Heart left ventricle (tissue), 16 donors: ENCODE measurements at regions of chr7 and their contacts with region 1.

Region 1: DNA sequence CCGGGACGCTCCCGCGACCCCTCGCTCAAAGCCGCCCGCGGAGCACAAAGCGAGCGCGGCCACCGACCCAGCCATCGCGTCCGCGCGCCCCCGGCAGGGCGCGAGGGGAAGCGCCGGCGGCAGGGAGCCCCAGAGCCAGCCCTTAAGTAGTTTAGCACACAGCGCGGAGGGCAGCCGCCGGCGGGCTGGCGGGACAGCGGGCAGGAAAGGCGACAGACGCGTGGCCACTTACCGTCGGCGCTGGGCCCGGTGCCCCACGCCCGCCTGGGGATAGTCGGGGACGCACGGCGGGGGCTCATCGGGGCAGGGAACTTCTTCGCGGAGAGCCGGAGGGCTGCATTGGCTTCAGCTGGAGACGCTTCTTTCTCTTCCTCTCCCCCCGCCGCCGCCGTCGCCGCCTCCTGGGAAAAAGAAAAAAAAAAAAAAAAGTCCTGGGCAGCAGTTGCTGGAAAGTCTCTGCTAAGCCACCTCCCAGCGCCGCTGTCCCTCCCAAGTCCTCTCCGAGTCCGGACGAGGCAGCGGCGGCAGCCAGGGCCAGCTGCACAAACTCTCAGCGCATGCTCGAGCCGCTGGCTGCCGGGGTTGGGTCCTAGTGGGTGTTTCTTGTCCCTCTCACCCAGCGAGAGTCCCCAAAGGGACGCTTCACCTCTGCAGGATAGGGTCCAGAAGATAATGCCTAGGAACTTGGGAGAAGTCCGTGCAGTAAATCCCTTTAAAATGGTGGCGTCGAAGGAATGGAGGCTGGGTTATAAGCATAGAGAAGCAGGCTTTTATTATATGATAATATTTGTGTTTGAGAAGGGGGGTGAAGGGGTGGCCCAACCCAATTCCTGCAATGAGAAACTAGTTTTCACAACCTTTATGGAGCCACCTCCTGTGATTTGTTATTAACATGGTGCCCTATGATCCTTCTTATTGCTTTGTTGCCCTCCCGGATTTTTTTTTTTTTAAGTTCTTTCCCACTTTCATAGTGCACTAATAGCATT is at the start of gene TSPAN12:
- DNase-seq: peak; percentile 86 to 94 (median 93)
- ATAC-seq: peak; percentile 88 to 96 (median 94)
- H3K4me3 ChIP-seq: peak within 1 kb of the TSS; percentile 68 to 90 (median 76)
- H3K27ac ChIP-seq: peak within 1 kb of the TSS; percentile 81 to 98 (median 94)
- H3K4me1 ChIP-seq: peaks cover 0 to 18% (median 7%) of the 10 kb centered on the region in 12 donors
- H3K27me3 ChIP-seq: peaks cover 0 to 20% (median 0%) of the 10 kb centered on the region in 9 donors
- CTCF ChIP-seq: peak; percentile 50 to 90 (median 75)
- POLR2A ChIP-seq: no peak
- total RNA-seq, gene TSPAN12: 24.2 to 85.0 (median 59.7) TPM

Region 2: DNA sequence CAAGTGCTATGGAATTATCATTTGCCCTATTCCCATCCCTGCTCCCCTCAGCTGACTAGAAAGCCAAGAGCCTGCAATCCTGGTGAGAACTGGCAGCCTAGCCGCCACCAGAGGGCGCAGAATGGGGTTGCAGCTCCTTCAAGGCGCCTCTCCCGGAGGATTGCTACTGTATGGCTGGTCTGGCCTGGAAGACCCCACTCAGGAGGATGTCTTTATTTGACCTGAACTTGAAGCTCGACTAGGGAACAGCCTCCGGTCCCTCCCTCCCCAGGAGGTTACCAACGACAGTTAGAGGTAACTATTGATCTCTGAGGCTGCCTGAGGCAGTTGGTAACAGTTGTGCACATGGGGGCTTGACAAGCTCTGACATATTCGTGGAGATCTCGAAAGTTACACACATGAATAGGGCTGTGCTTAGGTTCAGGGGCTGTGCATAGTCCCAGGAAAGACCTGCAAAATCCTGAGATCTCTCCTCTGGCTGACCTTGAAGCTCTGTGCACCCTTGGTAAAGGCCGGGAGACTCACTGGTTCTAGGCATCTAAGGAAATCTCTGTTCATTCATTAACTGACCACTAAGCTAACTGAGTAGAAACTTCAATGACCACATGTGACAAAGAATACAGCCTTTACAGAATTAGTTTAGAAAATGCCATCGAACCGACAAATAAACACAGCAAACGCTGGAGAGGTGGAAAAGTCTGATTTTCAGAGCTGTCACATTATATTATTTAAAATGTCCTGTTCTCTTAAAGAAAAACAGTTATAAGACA is 65.6 kb before region 1 on chr7:
- intact Hi-C with region 1: loop called in 2 of 10 experiments (anchors 5 kb)
- DNase-seq: peak; percentile 65 to 83 (median 78)
- ATAC-seq: peak in 3 of 4 donors; percentile 75 to 92 (median 89)
- H3K4me3 ChIP-seq: no peak overlapping the region
- H3K27ac ChIP-seq: no peak overlapping the region
- H3K4me1 ChIP-seq: peaks cover 0 to 27% (median 5%) of the 10 kb centered on the region in 12 donors
- H3K27me3 ChIP-seq: no peaks in the 10 kb centered on the region
- CTCF ChIP-seq: peak; percentile 65 to 90 (median 80)
- POLR2A ChIP-seq: no peak

Region 3: GRCh38 chr7:120805636-120806388 is 52.1 kb before region 1 on chr7:
- intact Hi-C with region 1: loop called (anchors 2 to 5 kb)
- DNase-seq: peak in 4 of 5 donors; percentile 30 to 56 (median 48)
- ATAC-seq: peak in 1 of 4 donors; percentile 75
- H3K4me3 ChIP-seq: no peak overlapping the region
- H3K27ac ChIP-seq: no peak overlapping the region
- H3K4me1 ChIP-seq: peaks cover 0 to 26% (median 1%) of the 10 kb centered on the region in 12 donors
- H3K27me3 ChIP-seq: no peaks in the 10 kb centered on the region
- CTCF ChIP-seq: peak; percentile 82 to 93 (median 89)
- POLR2A ChIP-seq: no peak

Region 4: GRCh38 chr7:120941064-120941463 is 83.2 kb after region 1 on chr7:
- intact Hi-C with region 1: loop called in 4 of 10 experiments (anchors 5 to 10 kb)
- DNase-seq: no peak
- ATAC-seq: peak in 1 of 4 donors; percentile 50
- H3K4me3 ChIP-seq: no peak overlapping the region
- H3K27ac ChIP-seq: no peak overlapping the region
- H3K4me1 ChIP-seq: peaks cover 0 to 8% (median 0%) of the 10 kb centered on the region in 12 donors
- H3K27me3 ChIP-seq: no peaks in the 10 kb centered on the region
- CTCF ChIP-seq: peak in 9 of 12 donors; percentile 15 to 59 (median 53)
- POLR2A ChIP-seq: no peak

Region 5: GRCh38 chr7:120950539-120951308 is 92.8 kb after region 1 on chr7 and contains the start of gene ING3:
- intact Hi-C with region 1: loop called in 7 of 10 experiments (anchors 1 to 10 kb)
- DNase-seq: peak; percentile 97 to 98 (median 98)
- ATAC-seq: peak; percentile 98 to 99 (median 99)
- H3K4me3 ChIP-seq: peak within 1 kb of the TSS; percentile 53 to 79 (median 72)
- H3K27ac ChIP-seq: peak within 1 kb of the TSS; percentile 65 to 98 (median 96)
- H3K4me1 ChIP-seq: peaks cover 6 to 27% (median 20%) of the 10 kb centered on the region in 12 donors
- H3K27me3 ChIP-seq: no peaks in the 10 kb centered on the region
- CTCF ChIP-seq: no peak
- POLR2A ChIP-seq: peak in 1 of 2 donors; percentile 45
- total RNA-seq, gene ING3: 9.3 to 16.0 (median 13.3) TPM

Region 6: GRCh38 chr7:121032645-121033460 is 175.0 kb after region 1 on chr7:
- intact Hi-C with region 1: no loop called
- DNase-seq: no peak
- ATAC-seq: peak in 2 of 4 donors; percentile 32 to 39
- H3K4me3 ChIP-seq: no peak overlapping the region
- H3K27ac ChIP-seq: peak overlapping the region in 3 of 12 donors; percentile 5 to 39 (median 23)
- H3K4me1 ChIP-seq: peaks cover 0 to 44% (median 30%) of the 10 kb centered on the region in 12 donors
- H3K27me3 ChIP-seq: no peaks in the 10 kb centered on the region
- CTCF ChIP-seq: no peak
- POLR2A ChIP-seq: no peak

Region 7: DNA sequence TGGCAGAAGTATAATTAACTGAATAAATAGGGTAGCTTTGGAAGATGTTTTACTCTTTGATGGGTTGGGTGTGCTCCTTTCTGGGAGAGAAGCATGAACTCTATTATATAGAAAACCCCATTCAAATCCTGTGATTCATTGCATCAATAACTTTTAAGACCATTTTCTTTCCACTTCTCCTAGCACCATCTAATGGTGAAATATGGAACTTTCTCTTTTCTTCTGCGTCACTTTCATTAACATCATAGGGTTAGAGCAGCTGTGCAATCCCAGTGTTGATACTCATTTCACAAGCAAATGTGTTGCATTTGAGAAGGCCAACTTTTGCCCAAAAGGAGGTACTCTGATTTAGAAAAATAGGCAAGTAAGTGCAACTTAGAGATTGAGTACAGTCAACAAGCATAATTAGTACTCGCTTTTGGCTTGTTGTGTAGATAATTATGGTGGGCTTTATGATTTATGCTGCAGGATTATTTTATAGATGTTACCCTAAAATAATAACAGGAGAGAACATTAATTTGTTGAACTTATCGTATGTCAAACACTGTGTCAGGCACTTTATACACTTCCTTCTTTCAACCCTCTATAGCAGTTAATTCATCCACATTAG is 223.6 kb after region 1 on chr7:
- intact Hi-C with region 1: loop called in 2 of 10 experiments (anchors 5 to 10 kb)
- DNase-seq: no peak
- ATAC-seq: peak in 3 of 4 donors; percentile 36 to 62 (median 62)
- H3K4me3 ChIP-seq: no peak overlapping the region
- H3K27ac ChIP-seq: peak overlapping the region in 8 of 12 donors; percentile 13 to 83 (median 46)
- H3K4me1 ChIP-seq: peaks cover 0 to 53% (median 29%) of the 10 kb centered on the region in 12 donors
- H3K27me3 ChIP-seq: no peaks in the 10 kb centered on the region
- CTCF ChIP-seq: peak; percentile 64 to 81 (median 76)
- POLR2A ChIP-seq: no peak